T-cell (primary cell): ENCODE measurements at regions of chr1 and their contacts with region 1.

Region 1: DNA sequence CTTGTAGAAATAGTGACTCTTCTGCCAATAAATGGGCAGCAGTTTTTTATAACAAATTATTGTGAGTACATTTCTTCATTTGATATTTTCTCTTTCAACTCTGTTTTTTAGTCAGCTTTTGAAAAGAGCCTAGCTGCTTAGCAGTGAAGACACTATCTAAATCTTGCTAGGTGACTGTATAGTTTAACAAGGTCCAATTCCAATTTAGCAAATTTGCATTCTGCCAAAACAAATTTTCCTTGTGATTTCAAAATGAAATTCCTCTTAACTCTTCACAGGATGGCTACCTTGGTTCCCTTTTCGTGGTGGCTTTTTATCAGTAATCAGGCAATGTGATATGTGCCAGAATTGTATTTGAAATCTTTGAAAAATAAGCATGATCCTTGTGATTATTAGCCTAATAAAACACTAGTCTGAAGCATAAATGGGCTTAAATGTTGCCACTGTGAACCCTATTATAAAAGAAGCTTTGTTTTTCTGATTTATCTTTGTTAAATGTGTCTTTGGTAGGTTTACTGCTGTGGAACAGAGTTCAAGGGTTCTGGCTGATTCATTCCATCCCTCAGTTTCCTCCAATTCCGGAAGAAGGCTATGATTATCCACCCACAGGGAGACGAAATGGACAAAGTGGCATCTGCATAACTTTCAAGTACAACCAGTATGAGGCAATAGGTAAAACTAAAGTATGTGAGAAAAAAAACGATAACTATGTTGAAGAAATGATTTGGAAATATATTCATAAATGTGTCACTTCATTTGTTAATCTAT is 12.2 kb downstream of the DNASE2B start:
- DNase-seq: no peak
- ATAC-seq: no peak
- H3K4me3 ChIP-seq: no peak overlapping the region
- H3K4me3 Mint-ChIP-seq: no peak overlapping the region
- H3K27ac ChIP-seq: no peak overlapping the region
- H3K27ac Mint-ChIP-seq: no peak overlapping the region
- H3K4me1 ChIP-seq: no peaks in the 10 kb centered on the region
- H3K4me1 Mint-ChIP-seq: no peaks in the 10 kb centered on the region
- H3K27me3 ChIP-seq: no peaks in the 10 kb centered on the region
- H3K27me3 Mint-ChIP-seq: peaks cover 0 to 4% of the 10 kb centered on the region in 2 donors

Region 2: GRCh38 chr1:84353695-84354094 is 56.8 kb before region 1 on chr1:
- CTCF ChIA-PET with region 1: no interaction called
- POLR2A ChIA-PET with region 1: no interaction called
- DNase-seq: no peak
- ATAC-seq: no peak
- H3K4me3 ChIP-seq: no peak overlapping the region
- H3K4me3 Mint-ChIP-seq: no peak overlapping the region
- H3K27ac ChIP-seq: no peak overlapping the region
- H3K27ac Mint-ChIP-seq: no peak overlapping the region
- H3K4me1 ChIP-seq: no peaks in the 10 kb centered on the region
- H3K4me1 Mint-ChIP-seq: peaks cover 0 to 7% (median 0%) of the 10 kb centered on the region in 3 donors
- H3K27me3 ChIP-seq: no peaks in the 10 kb centered on the region
- H3K27me3 Mint-ChIP-seq: peaks cover 0 to 7% of the 10 kb centered on the region in 2 donors

Region 3: GRCh38 chr1:84387480-84388163 is 22.9 kb before region 1 on chr1:
- CTCF ChIA-PET with region 1: no interaction called
- POLR2A ChIA-PET with region 1: interaction called in 1 of 2 experiments, 12 read pairs
- DNase-seq: peak in 1 of 35 experiments; percentile 17
- ATAC-seq: no peak
- H3K4me3 ChIP-seq: no peak overlapping the region
- H3K4me3 Mint-ChIP-seq: no peak overlapping the region
- H3K27ac ChIP-seq: no peak overlapping the region
- H3K27ac Mint-ChIP-seq: no peak overlapping the region
- H3K4me1 ChIP-seq: no peaks in the 10 kb centered on the region
- H3K4me1 Mint-ChIP-seq: no peaks in the 10 kb centered on the region
- H3K27me3 ChIP-seq: no peaks in the 10 kb centered on the region
- H3K27me3 Mint-ChIP-seq: peaks cover 0 to 8% of the 10 kb centered on the region in 2 donors